HepG2 (cell line): ENCODE measurements at regions of chr11 and their contacts with region 1.

Region 1: DNA sequence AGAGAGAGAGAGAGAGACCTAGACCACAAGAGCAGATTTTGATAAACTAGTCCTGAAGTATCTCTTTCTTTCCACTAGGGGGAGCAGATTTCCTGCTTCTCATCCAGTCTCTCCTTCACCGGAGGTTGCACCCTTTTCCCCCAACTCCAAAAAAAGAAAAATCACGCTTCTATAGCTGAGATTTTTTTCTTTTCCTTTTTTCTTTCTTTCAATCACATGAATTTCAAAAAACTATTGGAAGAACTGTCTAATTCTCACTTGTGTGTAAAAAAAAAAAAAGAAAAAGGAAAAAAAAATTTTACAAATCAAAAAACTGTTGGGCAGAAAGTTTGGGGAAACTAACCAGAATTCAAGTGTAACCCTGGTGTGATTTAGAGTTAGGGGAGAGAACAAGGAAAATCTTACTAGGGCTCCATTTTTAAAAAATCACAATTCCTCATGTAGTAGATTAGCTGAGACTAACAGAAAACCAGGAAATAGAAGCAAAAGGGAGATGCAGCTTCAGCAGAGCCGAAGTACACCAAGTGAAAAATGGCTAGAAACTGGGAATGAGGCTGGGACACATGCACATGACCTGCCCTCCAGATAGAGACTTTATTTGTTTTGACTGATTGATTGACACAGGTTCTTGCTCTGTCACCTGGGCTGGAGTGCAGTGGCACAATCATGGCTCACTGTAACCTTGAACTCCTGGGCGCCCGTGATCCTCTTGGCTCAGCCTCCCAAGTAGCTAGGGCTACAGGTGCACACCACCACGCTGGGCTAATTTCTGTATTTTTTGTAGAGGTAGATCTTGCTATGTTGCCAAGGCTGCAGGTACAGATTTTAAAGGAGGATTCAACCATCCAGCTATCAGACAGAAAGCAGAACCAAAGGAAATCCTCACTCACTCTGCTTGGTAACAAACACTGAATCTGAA is 27.1 kb downstream of the SDHD start:
- DNase-seq: peak; percentile 54
- ATAC-seq: peak; percentile 58; the same call in 1 of the 3 replicates
- H3K4me3 ChIP-seq: peak overlapping the region in 1 of 3 experiments; percentile 34; a peak in 1 of 6 replicates
- H3K27ac ChIP-seq: no peak overlapping the region
- H3K4me1 ChIP-seq: peaks cover 5% of the 10 kb centered on the region; the same call in 1 of the 2 replicates
- H3K27me3 ChIP-seq: no peaks in the 10 kb centered on the region
- CTCF ChIP-seq: peak; percentile 65
- EP300 ChIP-seq: no peak
- POLR2A ChIP-seq: no peak
- RAD21 ChIP-seq: peak; percentile 18; the same call in 1 of the 2 replicates

Region 2: GRCh38 chr11:112174789-112175598 is 61.2 kb after region 1 on chr11 and contains the start of gene BCO2:
- CTCF ChIA-PET with region 1: interaction called, 25 read pairs
- POLR2A ChIA-PET with region 1: no interaction called
- in situ Hi-C with region 1: loop called (anchors 5 kb)
- intact Hi-C with region 1: loop called (anchors 1 kb)
- DNase-seq: peak; percentile 70
- ATAC-seq: peak; percentile 97
- H3K4me3 ChIP-seq: no peak within 1 kb of the TSS
- H3K27ac ChIP-seq: no peak within 1 kb of the TSS
- H3K4me1 ChIP-seq: peaks cover 13% of the 10 kb centered on the region
- H3K27me3 ChIP-seq: no peaks in the 10 kb centered on the region; a peak in 1 of 5 replicates
- CTCF ChIP-seq: peak; percentile 72
- EP300 ChIP-seq: peak in 1 of 2 experiments; percentile 15; a peak in 1 of 4 replicates
- POLR2A ChIP-seq: no peak
- RAD21 ChIP-seq: no peak
- total RNA-seq, gene BCO2: 0.38 TPM in 1 of 2 replicates, not detected in the other

Region 3: DNA sequence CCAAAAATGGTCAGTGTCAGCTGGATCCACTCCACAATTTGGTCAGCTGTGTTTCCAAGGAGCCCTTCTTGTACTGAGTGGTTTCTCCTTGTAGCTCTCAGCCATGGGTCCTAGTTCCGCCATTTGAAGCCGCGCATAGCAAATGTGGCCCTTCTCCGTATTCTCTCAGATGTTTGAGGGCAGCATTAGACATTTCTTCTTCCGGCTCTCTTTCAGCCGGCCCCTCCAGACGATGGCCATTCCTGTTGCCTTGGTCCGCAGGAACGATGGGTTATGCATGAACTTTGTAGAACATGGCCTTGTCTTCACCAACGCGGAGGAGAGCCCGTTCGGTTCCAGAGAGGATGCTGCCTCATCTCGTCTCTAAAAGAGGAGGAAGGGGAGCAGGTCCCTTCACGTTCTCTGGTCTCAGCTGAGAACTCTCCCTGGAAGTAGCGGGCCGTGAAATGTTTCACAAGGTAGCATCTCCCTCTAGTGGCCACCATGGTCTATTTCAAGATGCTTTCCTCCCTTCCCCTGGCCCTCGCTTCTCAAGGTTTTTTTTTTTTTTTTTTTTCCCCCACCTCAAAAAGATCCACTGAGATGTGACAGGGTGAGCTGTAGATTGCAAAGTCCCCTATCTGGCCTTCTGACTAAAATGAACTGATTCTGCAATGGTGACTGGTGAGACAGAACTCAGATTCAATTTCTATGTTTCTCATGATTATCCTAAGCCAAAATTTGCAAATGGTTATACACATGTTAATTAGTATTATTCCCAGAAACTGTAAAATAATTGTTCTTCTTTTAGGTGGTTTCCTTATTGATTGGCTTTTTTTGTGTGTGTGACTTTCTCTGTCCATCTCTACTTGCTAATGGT is 166.7 kb after region 1 on chr11:
- CTCF ChIA-PET with region 1: interaction called, 10 read pairs
- POLR2A ChIA-PET with region 1: no interaction called
- in situ Hi-C with region 1: loop called (anchors 10 kb)
- intact Hi-C with region 1: loop called (anchors 1 kb)
- DNase-seq: peak; percentile 72
- ATAC-seq: peak; percentile 94
- H3K4me3 ChIP-seq: peak overlapping the region; percentile 33 to 62 (median 46); a peak in 5 of 6 replicates
- H3K27ac ChIP-seq: no peak overlapping the region
- H3K4me1 ChIP-seq: peaks cover 23% of the 10 kb centered on the region
- H3K27me3 ChIP-seq: no peaks in the 10 kb centered on the region
- CTCF ChIP-seq: peak; percentile 82
- EP300 ChIP-seq: no peak
- POLR2A ChIP-seq: no peak
- RAD21 ChIP-seq: peak; percentile 51